K562 (cell line): ENCODE measurements at regions of chr13 and their contacts with region 1.

Region 1: GRCh38 chr13:45402641-45403040 is 15.5 kb downstream of the SLC25A30 start:
- DNase-seq: no peak
- ATAC-seq: no peak
- H3K4me3 ChIP-seq: no peak overlapping the region
- H3K27ac ChIP-seq: no peak overlapping the region
- H3K4me1 ChIP-seq: no peaks in the 10 kb centered on the region
- H3K27me3 ChIP-seq: no peaks in the 10 kb centered on the region
- CTCF ChIP-seq: no peak
- EP300 ChIP-seq: no peak
- POLR2A ChIP-seq: no peak
- RAD21 ChIP-seq: no peak

Region 2: GRCh38 chr13:44088991-44089413 is 1313.6 kb before region 1 on chr13:
- CTCF ChIA-PET with region 1: no interaction called
- POLR2A ChIA-PET with region 1: no interaction called
- in situ Hi-C with region 1: no loop called
- intact Hi-C with region 1: no loop called
- DNase-seq: no peak
- ATAC-seq: no peak
- H3K4me3 ChIP-seq: no peak overlapping the region
- H3K27ac ChIP-seq: no peak overlapping the region
- H3K4me1 ChIP-seq: no peaks in the 10 kb centered on the region
- H3K27me3 ChIP-seq: no peaks in the 10 kb centered on the region
- CTCF ChIP-seq: no peak
- EP300 ChIP-seq: no peak
- POLR2A ChIP-seq: no peak
- RAD21 ChIP-seq: no peak

Region 3: GRCh38 chr13:45055198-45055901 is 347.3 kb before region 1 on chr13:
- CTCF ChIA-PET with region 1: no interaction called
- POLR2A ChIA-PET with region 1: no interaction called
- in situ Hi-C with region 1: loop called (anchors 10 kb)
- intact Hi-C with region 1: no loop called
- DNase-seq: no peak
- ATAC-seq: no peak
- H3K4me3 ChIP-seq: no peak overlapping the region
- H3K27ac ChIP-seq: no peak overlapping the region
- H3K4me1 ChIP-seq: peaks cover 0 to 6% of the 10 kb centered on the region in 2 experiments; a peak in 2 of 5 replicates
- H3K27me3 ChIP-seq: no peaks in the 10 kb centered on the region
- CTCF ChIP-seq: no peak
- EP300 ChIP-seq: no peak
- POLR2A ChIP-seq: no peak
- RAD21 ChIP-seq: no peak